WTC11 (cell line): ENCODE measurements at regions of chr12 and their contacts with region 1.

Region 1: DNA sequence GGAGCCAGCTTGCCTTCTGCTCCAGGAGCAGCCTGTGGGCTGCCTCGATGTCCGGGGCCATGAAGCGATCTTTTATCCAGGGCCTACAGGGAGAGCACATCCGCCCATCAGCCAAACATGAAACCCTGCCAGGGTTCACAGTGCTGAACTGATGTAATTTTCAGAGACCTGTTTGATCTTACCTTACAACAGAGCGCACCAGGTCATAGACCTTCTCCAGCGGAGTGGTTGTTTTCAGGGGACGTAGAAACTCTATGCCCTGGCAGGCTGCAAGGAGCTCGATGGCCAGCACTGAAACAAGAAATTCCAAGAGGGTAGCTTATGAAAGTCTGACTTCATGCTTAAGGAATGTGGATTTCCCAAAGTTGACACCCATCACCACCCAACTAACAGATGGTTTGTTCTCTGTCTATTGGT is 19.7 kb downstream of the HAL start:
- DNase-seq: no peak
- ATAC-seq: no peak
- H3K4me3 Mint-ChIP-seq: no peak overlapping the region
- H3K27ac Mint-ChIP-seq: no peak overlapping the region
- H3K4me1 Mint-ChIP-seq: peaks cover 19% of the 10 kb centered on the region
- H3K27me3 Mint-ChIP-seq: no peaks in the 10 kb centered on the region
- CTCF ChIP-seq: no peak

Region 2: GRCh38 chr12:96044017-96044942 is 67.9 kb after region 1 on chr12:
- CTCF ChIA-PET with region 1: no interaction called
- POLR2A ChIA-PET with region 1: no interaction called
- DNase-seq: no peak
- ATAC-seq: no peak
- H3K4me3 Mint-ChIP-seq: no peak overlapping the region
- H3K27ac Mint-ChIP-seq: no peak overlapping the region
- H3K4me1 Mint-ChIP-seq: peaks cover 11% of the 10 kb centered on the region; the same call in 1 of the 2 replicates
- H3K27me3 Mint-ChIP-seq: no peaks in the 10 kb centered on the region
- CTCF ChIP-seq: no peak

Region 3: GRCh38 chr12:96434107-96434506 is 457.7 kb after region 1 on chr12:
- CTCF ChIA-PET with region 1: no interaction called
- POLR2A ChIA-PET with region 1: interaction called, 11 read pairs
- DNase-seq: no peak
- ATAC-seq: no peak
- H3K4me3 Mint-ChIP-seq: no peak overlapping the region
- H3K27ac Mint-ChIP-seq: no peak overlapping the region
- H3K4me1 Mint-ChIP-seq: no peaks in the 10 kb centered on the region
- H3K27me3 Mint-ChIP-seq: no peaks in the 10 kb centered on the region
- CTCF ChIP-seq: no peak